ENCODE measurements at regions of chr20 and their contacts with region 1.

Region 1: GRCh38 chr20:24992487-24993205 is at the start of gene APMAP:
- DNase-seq: peak; percentile 98
- ATAC-seq: peak; percentile 95
- H3K4me3 Mint-ChIP-seq: peak within 1 kb of the TSS; percentile 97
- H3K27ac Mint-ChIP-seq: peak within 1 kb of the TSS; percentile 91
- H3K4me1 Mint-ChIP-seq: peaks cover 48% of the 10 kb centered on the region
- H3K27me3 Mint-ChIP-seq: no peaks in the 10 kb centered on the region
- total RNA-seq, gene APMAP: 26.8 to 34.0 TPM

Region 2: GRCh38 chr20:23920417-23921325 is 1072.0 kb before region 1 on chr20:
- CTCF ChIA-PET with region 1: no interaction called
- POLR2A ChIA-PET with region 1: no interaction called
- intact Hi-C with region 1: no loop called
- DNase-seq: no peak
- ATAC-seq: no peak
- H3K4me3 Mint-ChIP-seq: no peak overlapping the region
- H3K27ac Mint-ChIP-seq: no peak overlapping the region
- H3K4me1 Mint-ChIP-seq: peaks cover 42% of the 10 kb centered on the region
- H3K27me3 Mint-ChIP-seq: no peaks in the 10 kb centered on the region

Region 3: DNA sequence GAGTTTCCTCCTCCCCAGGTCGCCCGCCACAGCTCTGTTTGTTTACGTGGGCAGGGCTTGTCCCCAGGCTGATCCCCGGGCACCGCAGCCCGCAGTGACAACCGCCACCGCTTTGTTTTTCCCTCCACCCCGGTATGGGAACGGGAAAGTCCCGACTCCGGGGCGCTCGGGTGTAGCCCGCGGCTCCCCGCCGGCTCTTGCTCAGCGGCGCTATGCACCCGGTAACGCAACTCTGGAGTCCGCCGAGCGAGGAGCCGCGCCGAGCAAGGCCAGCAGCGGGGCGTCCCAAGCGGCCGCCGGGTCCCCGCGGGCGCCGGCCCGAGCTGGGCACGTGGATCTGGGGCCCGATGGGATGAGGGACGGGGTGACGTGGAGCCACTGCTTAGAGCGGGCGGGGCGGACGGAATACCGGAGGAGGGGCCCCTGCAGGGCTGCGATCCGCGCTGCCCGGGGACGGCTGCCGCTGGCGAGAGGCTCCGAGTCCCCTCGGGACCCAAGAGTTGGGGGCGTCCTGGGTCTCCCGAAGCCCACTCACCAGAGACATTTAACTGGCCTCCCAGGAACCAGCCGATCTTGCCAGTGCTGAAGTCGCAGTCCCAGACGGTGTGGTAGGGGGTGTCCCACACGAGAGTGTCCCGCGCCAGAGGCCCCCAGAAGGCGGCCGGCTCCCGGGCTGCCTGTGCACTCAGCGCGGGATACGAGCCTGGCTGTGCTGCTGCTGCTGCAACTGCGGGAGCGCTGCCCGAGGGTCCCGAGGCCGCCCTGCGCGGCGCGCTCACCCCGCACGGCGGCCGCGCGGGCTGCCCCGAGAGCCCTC is 64.8 kb after region 1 on chr20:
- CTCF ChIA-PET with region 1: interaction called, 96 read pairs
- POLR2A ChIA-PET with region 1: interaction called, 4 read pairs
- intact Hi-C with region 1: loop called in 1 of 2 experiments (anchors 1 kb)
- DNase-seq: peak; percentile 86
- ATAC-seq: peak; percentile 52
- H3K4me3 Mint-ChIP-seq: peak overlapping the region; percentile 74
- H3K27ac Mint-ChIP-seq: peak overlapping the region; percentile 77
- H3K4me1 Mint-ChIP-seq: peaks cover 53% of the 10 kb centered on the region
- H3K27me3 Mint-ChIP-seq: no peaks in the 10 kb centered on the region

Region 4: DNA sequence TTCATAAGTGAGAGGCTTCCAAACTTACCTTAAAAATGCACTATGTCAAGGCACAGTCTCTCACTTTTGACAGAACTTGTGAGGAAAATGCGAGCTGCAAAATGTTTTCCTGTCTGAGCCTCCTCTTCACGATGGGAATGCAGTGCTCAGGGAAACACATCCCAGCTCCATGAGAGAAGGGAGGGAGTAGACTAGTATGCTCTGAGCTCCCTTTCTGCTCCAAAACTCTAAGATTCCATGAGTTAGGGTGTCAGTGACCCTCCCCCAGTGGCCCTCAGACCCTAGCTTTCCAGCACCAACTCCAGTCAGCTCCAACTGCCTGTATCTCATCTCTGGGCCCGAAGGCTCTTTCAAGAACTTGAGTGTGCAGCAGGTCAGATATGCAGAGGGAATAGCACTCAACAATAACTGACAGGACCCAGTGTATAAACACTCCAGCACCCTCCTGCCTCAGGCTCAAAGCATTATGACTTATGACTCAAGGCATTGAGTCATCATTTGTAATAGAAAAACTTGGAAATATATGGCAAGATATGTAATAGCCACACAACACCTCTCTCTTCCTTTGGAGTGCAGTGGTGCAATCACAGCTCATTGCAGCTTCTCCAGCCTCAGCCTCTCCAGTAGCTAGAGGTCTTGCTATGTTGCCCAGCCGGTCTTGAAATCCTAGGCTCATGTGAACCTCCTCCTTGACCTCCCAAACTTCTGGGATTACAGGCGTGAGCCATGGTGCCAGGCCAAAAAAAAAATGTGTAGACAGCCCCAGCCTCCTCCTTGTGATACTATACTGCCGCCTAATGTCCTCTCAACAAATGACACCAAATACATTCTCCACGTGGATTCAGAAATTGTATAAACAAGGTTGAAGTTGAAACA is 186.2 kb after region 1 on chr20:
- CTCF ChIA-PET with region 1: interaction called, 10 read pairs
- POLR2A ChIA-PET with region 1: no interaction called
- intact Hi-C with region 1: loop called (anchors 1 kb)
- DNase-seq: peak; percentile 15
- ATAC-seq: peak; percentile 74
- H3K4me3 Mint-ChIP-seq: no peak overlapping the region
- H3K27ac Mint-ChIP-seq: no peak overlapping the region
- H3K4me1 Mint-ChIP-seq: peaks cover 2% of the 10 kb centered on the region
- H3K27me3 Mint-ChIP-seq: peaks cover 4% of the 10 kb centered on the region

Region 5: GRCh38 chr20:25269594-25270091 is 277.0 kb after region 1 on chr20:
- CTCF ChIA-PET with region 1: no interaction called
- POLR2A ChIA-PET with region 1: no interaction called
- intact Hi-C with region 1: no loop called
- DNase-seq: peak; percentile 2
- ATAC-seq: no peak
- H3K4me3 Mint-ChIP-seq: no peak overlapping the region
- H3K27ac Mint-ChIP-seq: no peak overlapping the region
- H3K4me1 Mint-ChIP-seq: peaks cover 3% of the 10 kb centered on the region
- H3K27me3 Mint-ChIP-seq: no peaks in the 10 kb centered on the region

Region 6: GRCh38 chr20:25294459-25295385 is 302.1 kb after region 1 on chr20:
- CTCF ChIA-PET with region 1: no interaction called
- POLR2A ChIA-PET with region 1: no interaction called
- intact Hi-C with region 1: loop called in 1 of 2 experiments (anchors 1 kb)
- DNase-seq: peak; percentile 78
- ATAC-seq: peak; percentile 91
- H3K4me3 Mint-ChIP-seq: no peak overlapping the region
- H3K27ac Mint-ChIP-seq: no peak overlapping the region
- H3K4me1 Mint-ChIP-seq: no peaks in the 10 kb centered on the region
- H3K27me3 Mint-ChIP-seq: no peaks in the 10 kb centered on the region

Region 7: DNA sequence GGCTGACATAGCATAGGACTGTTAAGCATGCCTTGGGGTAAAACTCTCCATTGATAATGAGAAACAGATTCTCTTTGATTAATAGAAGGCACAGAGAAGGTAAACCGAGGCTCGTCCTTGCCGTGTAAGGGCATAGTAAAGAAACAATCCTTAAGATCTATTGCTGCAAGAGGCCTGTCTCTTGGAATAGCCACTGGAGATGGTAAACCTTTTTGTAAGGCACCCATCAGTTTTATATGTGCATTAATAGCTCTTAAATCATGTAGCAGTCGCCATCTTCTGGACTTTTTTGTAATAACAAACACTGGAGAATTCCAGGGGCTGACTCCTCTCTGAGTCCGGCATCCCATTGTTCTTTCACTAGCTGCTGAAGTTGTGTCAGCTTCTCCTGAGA is 406.4 kb after region 1 on chr20:
- CTCF ChIA-PET with region 1: interaction called, 3 read pairs
- POLR2A ChIA-PET with region 1: no interaction called
- intact Hi-C with region 1: loop called (anchors 2 to 5 kb)
- DNase-seq: peak; percentile 15
- ATAC-seq: peak; percentile 63
- H3K4me3 Mint-ChIP-seq: no peak overlapping the region
- H3K27ac Mint-ChIP-seq: no peak overlapping the region
- H3K4me1 Mint-ChIP-seq: no peaks in the 10 kb centered on the region
- H3K27me3 Mint-ChIP-seq: no peaks in the 10 kb centered on the region

Region 8: GRCh38 chr20:25623736-25624499 is 631.3 kb after region 1 on chr20 and contains the start of gene NANP:
- CTCF ChIA-PET with region 1: no interaction called
- POLR2A ChIA-PET with region 1: no interaction called
- intact Hi-C with region 1: loop called (anchors 1 to 10 kb)
- DNase-seq: peak; percentile 95
- ATAC-seq: peak; percentile 87
- H3K4me3 Mint-ChIP-seq: peak within 1 kb of the TSS; percentile 80
- H3K27ac Mint-ChIP-seq: peak within 1 kb of the TSS; percentile 95
- H3K4me1 Mint-ChIP-seq: peaks cover 21% of the 10 kb centered on the region
- H3K27me3 Mint-ChIP-seq: no peaks in the 10 kb centered on the region
- total RNA-seq, gene NANP: 6.1 to 8.3 TPM